Activated T-helper 2 cell treated with anti-CD3 and anti-CD28 coated beads, Interferon-gamma antibody, Interleukin-2, Interleukin-4, amounts not matched to agents 10 μg/mL and 5 μg/mL and 100 μg/mL, durations not matched to agents 14 hours and 24 hours and 36 hours (primary cell): ENCODE measurements at regions of chr13 and their contacts with region 1.

Region 1: DNA sequence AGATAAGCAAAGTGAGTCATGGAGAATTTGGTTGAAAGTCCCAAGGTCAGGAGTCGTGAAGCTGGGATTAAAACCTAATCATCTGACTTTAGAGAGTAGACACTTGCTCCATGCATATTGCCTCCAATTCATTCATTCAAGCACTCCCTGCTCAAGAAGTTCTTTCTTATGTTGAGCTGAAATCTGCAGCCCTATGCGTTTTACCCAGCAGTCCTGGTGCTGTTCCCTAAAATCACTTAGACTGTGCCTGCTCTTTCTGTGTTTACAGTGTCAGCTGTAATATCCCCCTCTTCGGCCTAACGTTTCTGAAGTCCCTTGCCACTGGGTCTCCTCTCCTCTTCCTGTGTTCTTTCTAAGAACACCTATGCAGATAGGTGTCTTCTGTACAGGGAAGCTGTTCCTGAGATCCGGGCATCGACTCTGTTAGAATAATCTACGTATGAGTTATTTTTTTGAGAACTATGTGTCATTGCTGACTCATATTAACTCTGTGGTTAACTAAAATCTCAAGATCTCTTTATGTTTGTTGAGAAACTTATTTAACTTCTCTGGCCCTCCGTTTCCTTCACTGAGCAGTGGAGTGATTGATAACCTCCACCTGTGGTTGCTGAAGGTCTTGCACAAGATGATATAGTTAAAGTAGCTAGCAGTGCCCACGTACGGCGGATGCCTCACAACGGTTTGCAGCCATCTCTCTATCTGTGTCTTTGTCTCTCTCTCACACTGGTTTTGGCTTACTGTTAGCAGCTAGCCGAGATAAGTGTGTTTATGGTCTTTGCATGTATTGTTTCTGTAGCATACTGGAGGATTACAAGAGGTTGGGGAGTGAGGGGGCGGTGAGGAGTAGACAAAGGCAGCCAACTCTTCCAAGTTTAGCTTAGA is 4.7 kb downstream of the ALOX5AP start:
- DNase-seq: peak; percentile 78
- H3K4me3 Mint-ChIP-seq: peak overlapping the region; percentile 76
- H3K27ac Mint-ChIP-seq: peak overlapping the region; percentile 91
- H3K4me1 Mint-ChIP-seq: peaks cover 79% of the 10 kb centered on the region
- H3K27me3 Mint-ChIP-seq: no peaks in the 10 kb centered on the region

Region 2: DNA sequence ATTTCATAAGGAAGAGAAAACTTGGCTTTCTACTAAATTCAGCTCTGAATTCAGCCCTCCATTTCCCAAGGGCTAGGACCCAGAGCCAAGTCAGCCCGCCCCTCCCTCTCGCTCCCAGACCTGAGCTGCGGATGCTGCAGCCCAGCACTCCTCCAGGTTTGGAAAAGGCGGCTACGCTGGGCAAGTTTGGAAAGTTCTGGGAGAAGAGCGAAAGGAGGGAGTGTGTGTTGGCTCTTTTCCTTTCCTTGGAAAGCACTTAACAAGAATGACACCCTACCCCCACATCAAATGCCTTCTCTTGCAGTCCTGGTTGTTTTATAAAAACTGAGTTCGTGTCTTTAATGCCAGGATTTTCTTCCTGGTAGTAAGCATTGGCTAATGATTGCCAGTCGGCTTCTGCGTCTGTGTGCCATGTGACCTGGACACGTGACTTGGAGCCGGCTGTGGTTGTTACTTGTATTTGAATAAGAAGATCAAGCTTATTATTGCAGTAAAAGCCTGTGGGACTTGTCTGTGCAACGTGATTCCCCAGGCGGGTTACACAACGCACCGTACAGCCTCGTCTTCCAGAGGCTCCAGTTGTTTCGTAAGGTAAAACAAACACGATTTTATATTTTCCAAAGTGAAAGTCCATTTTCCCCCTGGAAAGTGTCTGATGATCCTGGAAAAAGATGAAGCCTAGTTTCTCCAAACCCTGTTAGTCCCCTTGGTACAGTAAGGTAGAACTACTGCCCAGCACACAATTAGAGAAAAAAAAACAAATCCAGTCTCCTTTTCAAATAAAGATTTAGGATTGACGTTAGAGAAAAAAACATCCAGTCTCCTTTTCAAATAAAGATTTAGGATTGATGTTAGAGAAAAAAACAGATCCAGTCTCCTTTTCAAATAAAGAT is 344.6 kb before region 1 on chr13:
- intact Hi-C with region 1: loop called (anchors 5 kb)
- DNase-seq: peak; percentile 67
- H3K4me3 Mint-ChIP-seq: peak overlapping the region; percentile 82
- H3K27ac Mint-ChIP-seq: peak overlapping the region; percentile 93
- H3K4me1 Mint-ChIP-seq: peaks cover 35% of the 10 kb centered on the region
- H3K27me3 Mint-ChIP-seq: no peaks in the 10 kb centered on the region

Region 3: DNA sequence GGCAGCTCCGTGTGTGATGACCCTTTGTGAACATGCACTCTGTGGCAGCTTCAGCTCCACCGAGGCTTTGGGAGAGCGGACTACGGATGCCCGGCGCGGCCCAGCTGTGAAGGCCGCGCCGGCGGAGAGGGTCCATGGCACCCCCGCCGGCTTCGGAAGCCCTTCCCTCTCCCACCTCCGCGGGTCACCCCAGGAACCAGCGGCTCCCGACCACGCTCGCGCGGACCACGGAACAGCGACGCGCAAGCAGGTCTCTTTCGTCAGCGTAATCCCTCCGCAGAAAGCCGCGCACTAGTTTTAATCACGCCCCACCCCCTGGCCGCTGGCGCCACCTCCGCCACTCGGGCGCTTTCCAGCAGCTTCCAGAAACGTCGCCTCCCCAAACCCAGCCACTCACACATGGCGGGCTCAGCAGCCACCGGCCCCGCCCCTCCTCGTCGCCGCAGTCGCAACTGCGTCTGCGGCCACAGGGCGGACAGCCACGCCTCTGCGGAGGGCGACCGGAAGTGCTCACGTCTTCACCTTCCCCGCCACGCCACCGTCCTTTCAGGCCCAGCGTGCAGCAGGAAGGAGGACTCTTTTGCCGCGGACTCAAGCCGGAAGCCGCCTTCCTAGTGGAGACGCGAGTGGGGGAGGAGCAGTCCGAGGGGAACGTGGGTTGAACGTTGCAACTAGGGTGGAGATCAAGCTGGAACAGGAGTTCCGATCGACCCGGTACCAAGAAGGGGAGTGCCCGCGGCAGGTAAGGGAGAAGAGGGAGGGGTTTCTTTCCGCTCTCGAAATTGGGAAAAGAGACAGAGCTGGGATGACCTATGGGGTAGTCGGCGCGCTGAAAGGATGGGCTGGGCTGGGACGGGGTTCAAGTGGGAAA is 122.5 kb before region 1 on chr13 and contains the start of gene USPL1:
- intact Hi-C with region 1: loop called (anchors 1 kb)
- DNase-seq: peak; percentile 99
- H3K4me3 Mint-ChIP-seq: no peak within 1 kb of the TSS
- H3K27ac Mint-ChIP-seq: no peak within 1 kb of the TSS
- H3K4me1 Mint-ChIP-seq: peaks cover 26% of the 10 kb centered on the region
- H3K27me3 Mint-ChIP-seq: no peaks in the 10 kb centered on the region
- total RNA-seq, gene USPL1: 14.0 and 14.3 TPM in 2 replicates

Region 4: DNA sequence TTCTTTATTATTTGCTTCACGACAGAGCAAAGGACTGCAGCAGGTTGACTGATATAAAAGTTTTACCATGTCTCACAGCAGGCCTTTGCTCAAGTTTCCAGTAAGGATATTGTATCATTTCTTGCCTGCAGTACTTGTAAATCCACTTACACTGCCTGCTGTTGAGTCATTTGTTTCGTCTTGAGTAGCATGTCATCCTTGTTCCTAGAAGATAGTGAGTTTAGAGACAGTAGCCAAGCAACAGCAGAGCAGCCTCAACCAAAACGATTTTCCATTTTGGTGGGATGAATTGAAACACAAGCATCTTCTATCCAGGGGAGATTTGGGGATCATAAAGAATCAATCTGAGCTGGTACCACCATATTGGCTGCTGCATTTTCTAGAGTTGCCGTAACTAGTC is 28.6 kb before region 1 on chr13:
- intact Hi-C with region 1: loop called (anchors 1 kb)
- DNase-seq: no peak
- H3K4me3 Mint-ChIP-seq: no peak overlapping the region
- H3K27ac Mint-ChIP-seq: no peak overlapping the region
- H3K4me1 Mint-ChIP-seq: peaks cover 22% of the 10 kb centered on the region
- H3K27me3 Mint-ChIP-seq: peaks cover 5% of the 10 kb centered on the region

Region 5: GRCh38 chr13:30774214-30774730 is 34.3 kb after region 1 on chr13:
- intact Hi-C with region 1: loop called (anchors 1 kb)
- DNase-seq: no peak
- H3K4me3 Mint-ChIP-seq: no peak overlapping the region
- H3K27ac Mint-ChIP-seq: peak overlapping the region; percentile 1
- H3K4me1 Mint-ChIP-seq: peaks cover 20% of the 10 kb centered on the region
- H3K27me3 Mint-ChIP-seq: peaks cover 11% of the 10 kb centered on the region

Region 6: GRCh38 chr13:31161828-31162590 is 422.0 kb after region 1 on chr13 and contains the start of gene HSPH1:
- intact Hi-C with region 1: loop called (anchors 5 kb)
- DNase-seq: peak; percentile 98
- H3K4me3 Mint-ChIP-seq: peak within 1 kb of the TSS; percentile 95
- H3K27ac Mint-ChIP-seq: peak within 1 kb of the TSS; percentile 97
- H3K4me1 Mint-ChIP-seq: peaks cover 41% of the 10 kb centered on the region
- H3K27me3 Mint-ChIP-seq: no peaks in the 10 kb centered on the region
- total RNA-seq, gene HSPH1: 269 and 274 TPM in 2 replicates